ENCODE measurements at regions of chr6 and their contacts with region 1.

Region 1: GRCh38 chr6:36360241-36361054 is 23.8 kb upstream of the BNIP5 start:
- DNase-seq: peak; percentile 77 to 86
- H3K4me3 ChIP-seq: no peak overlapping the region
- H3K4me1 ChIP-seq: no peaks in the 10 kb centered on the region; the same call in 1 of the 2 replicates
- H3K27me3 ChIP-seq: no peaks in the 10 kb centered on the region

Region 2: GRCh38 chr6:36015666-36016065 is 344.8 kb before region 1 on chr6:
- in situ Hi-C with region 1: no loop called
- DNase-seq: no peak
- H3K4me3 ChIP-seq: no peak overlapping the region
- H3K4me1 ChIP-seq: peaks cover 5% of the 10 kb centered on the region; the same call in 1 of the 2 replicates
- H3K27me3 ChIP-seq: no peaks in the 10 kb centered on the region

Region 3: DNA sequence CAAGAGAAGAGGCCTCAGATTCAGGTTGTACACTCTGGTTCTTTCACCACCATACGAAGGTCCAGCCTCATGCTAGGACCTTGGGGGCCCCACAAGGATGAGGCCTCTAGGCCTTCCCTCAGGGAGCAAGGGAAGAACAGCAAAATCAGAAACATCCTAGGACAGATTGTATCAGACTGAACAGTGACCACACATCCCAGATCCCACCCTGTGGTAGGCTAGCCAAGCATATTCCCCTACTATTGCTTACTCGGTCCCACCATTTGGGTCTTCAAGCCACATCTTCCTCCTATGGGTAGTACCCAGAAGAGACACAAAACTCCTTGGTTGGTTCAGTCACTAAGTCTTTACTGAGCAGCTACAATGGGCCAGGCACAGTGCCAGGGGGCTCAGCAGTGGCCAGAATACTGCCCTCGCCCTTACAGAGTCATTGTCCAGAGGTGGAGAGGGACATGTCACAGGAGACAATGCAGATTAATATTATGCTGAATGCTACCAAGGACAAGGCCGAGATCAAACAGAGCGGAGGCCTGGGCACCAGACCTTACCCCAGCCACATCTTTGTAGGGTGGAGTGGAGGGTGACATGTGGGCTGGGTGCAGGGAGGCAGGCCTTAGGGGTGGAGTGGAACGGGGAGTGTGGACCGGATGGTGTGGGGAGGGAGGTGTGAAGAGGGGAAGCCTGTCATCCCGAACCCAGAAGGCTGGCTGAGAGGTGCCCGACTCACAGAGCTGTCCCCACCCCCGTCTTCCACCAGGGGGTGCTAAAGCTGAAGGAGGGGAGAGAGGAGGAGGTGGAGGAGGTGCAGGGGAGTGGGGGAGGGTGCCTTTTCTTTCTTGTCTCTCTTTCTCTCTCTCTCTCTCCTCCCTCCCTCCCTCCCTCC is 236.9 kb before region 1 on chr6:
- in situ Hi-C with region 1: loop called (anchors 5 kb)
- DNase-seq: peak; percentile 62 to 90
- H3K4me3 ChIP-seq: no peak overlapping the region
- H3K4me1 ChIP-seq: no peaks in the 10 kb centered on the region; the same call in 1 of the 2 replicates
- H3K27me3 ChIP-seq: no peaks in the 10 kb centered on the region

Region 4: GRCh38 chr6:36302227-36302976 is 58.0 kb before region 1 on chr6:
- in situ Hi-C with region 1: loop called (anchors 5 kb)
- DNase-seq: peak; percentile 89 to 97
- H3K4me3 ChIP-seq: no peak overlapping the region
- H3K4me1 ChIP-seq: peaks cover 12% of the 10 kb centered on the region
- H3K27me3 ChIP-seq: no peaks in the 10 kb centered on the region

Region 5: DNA sequence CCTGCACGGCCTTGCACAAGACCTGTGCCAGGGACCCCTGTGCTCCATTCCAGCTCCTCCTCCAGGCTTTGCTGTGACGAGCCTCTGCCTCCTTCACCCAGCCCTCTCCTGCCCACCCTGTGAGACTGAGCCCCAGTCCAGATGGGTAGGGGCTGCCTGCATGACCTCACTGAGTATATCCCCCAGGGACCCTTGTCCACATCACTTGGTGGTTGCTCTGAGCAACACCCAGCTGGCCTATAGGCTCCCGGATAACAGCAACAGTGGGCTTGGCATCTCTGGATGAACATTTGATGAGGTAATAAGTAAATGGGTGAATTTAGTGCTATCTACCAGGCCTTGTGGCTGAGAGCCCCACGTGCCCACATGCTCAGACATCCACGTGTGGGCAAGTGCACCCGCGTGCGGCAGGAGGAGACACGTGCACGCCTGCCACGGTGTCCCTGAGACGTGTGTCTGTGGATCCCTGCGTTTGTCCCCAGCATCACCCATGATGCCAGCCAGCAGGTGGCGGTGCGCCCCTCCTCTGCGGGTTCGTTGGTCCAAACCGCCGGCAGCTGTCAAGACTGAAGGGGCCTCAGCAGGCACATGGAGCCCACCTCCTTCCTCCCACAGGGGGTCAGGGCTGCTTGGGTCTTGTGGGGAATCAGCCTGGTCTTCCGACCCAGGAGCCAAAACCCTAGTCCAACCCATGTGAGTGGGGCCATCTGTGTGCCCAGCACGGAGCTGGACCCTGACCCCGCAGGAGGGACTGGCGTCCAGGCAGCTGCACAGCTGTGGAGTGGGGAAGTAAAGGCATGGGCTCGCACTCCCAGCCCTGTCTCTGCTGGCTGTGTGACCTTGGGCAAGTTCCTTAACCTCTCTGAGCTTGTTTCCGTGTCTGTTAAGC is 690.9 kb after region 1 on chr6:
- in situ Hi-C with region 1: no loop called
- DNase-seq: peak; percentile 66 to 94
- H3K4me3 ChIP-seq: no peak overlapping the region
- H3K4me1 ChIP-seq: peaks cover 7% of the 10 kb centered on the region
- H3K27me3 ChIP-seq: no peaks in the 10 kb centered on the region

Region 6: GRCh38 chr6:37074053-37074827 is 713.8 kb after region 1 on chr6:
- in situ Hi-C with region 1: no loop called
- DNase-seq: no peak
- H3K4me3 ChIP-seq: no peak overlapping the region
- H3K4me1 ChIP-seq: peaks cover 6% of the 10 kb centered on the region; the same call in 1 of the 2 replicates
- H3K27me3 ChIP-seq: no peaks in the 10 kb centered on the region

Measured in HAP-1 (cell line).